Right ventricle myocardium inferior (tissue), 1 donor: ENCODE measurements at regions of chr4 and their contacts with region 1.

Region 1: DNA sequence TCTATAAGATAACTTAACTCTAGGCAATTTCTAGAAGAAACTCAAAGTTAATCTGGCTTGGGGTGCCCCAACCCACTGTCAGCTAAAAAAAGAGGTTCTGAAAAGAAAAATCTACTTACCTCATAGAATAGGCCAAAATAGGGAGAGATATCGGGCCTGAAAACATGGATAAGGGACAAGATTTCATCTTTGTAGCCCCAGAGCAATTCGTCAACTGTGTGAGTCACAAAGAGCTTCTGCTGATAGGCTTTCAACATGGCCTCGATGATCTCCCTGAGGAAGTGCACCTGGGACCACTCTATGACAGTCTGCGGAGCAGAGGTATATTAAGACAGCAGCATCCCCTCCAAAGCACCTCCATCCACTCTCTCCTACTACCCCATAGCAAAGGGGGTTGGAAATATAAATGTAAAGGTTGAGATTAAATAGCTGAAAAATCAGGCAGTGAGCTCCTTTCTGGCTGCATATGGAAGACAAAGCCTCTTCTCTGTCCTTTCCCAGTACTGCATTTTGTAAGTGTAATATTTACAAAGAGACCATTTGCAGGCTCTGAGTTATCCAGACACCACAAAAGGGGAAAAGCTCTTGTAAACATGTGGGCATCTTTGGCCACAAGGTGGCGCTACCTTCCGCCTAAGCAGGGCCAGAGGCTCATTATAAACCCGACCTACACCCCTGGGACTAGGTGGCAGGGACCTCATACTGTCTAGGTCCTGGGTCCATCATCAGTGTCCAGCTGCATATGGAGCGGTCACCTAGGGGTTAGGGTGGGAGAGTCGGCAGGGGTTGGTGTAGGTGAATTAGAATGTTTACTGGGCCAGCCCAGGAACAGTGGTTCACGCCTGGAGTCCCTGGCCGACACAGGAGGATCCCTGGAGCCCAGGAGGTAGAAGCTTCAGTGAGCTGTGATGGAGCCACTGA is 31.5 kb upstream of the NUP54 start:
- DNase-seq: peak; percentile 90
- ATAC-seq: peak; percentile 82

Region 2: DNA sequence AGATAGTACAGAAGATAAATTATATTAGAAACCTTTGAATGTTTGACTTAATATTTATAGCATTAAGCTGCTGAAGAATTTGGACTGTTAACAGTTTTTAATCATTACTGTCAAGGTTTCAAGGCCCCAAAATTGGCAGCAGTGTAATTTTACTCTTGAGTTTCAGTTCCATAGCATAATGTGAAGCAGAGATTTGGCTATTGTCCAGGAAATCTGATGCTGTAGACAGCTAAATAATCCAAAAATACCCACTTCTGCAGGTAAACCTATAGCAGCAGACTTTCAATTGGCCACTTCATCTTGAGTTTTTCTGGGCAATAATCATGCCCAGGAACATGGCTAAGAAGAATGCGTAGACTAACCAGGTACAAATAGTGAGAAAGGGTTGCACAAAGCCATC is 750.5 kb before region 1 on chr4:
- intact Hi-C with region 1: no loop called
- DNase-seq: no peak
- ATAC-seq: no peak

Region 3: GRCh38 chr4:76213415-76214176 is 33.9 kb after region 1 on chr4 and contains the start of gene SCARB2:
- intact Hi-C with region 1: loop called (anchors 1 kb)
- DNase-seq: peak; percentile 95
- ATAC-seq: peak; percentile 97
- total RNA-seq, gene SCARB2: 102 TPM

Region 4: GRCh38 chr4:76251441-76252270 is 72.0 kb after region 1 on chr4 and contains the start of gene FAM47E:
- intact Hi-C with region 1: loop called (anchors 10 kb)
- DNase-seq: peak; percentile 90
- ATAC-seq: peak; percentile 97
- total RNA-seq, gene FAM47E: 2.4 TPM

Region 5: GRCh38 chr4:76420762-76421581 is 241.3 kb after region 1 on chr4 and contains the start of gene CCDC158:
- intact Hi-C with region 1: loop called (anchors 10 kb)
- DNase-seq: peak; percentile 63
- ATAC-seq: peak; percentile 86
- total RNA-seq, gene CCDC158: 0.16 TPM

Region 6: DNA sequence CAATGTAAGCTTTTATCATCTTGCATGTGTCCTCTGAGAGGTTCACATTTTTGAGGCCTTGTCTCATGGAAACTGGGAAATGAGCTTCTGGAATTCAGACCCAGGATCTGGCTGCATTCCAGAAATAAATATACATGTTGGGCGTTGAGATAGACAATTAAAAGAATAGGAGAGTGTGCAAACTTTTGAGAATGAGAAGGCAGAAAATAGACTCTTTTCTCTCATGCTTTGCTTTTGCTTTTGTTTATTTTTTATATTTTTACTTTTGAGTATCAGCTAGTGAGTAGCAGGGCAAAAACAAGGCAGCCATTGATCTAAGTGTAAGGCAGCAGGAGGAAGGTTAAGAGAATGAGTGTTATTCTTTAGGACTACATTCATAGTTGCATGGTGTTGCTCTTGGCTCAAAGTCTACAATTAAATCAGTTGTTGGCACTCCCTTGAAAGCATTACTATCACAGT is 267.8 kb after region 1 on chr4:
- intact Hi-C with region 1: no loop called
- DNase-seq: no peak
- ATAC-seq: no peak

Region 7: GRCh38 chr4:76504613-76505465 is 325.2 kb after region 1 on chr4:
- intact Hi-C with region 1: loop called (anchors 2 kb)
- DNase-seq: no peak
- ATAC-seq: no peak